PC-9 (cell line): ENCODE measurements at regions of chr1 and their contacts with region 1.

Region 1: DNA sequence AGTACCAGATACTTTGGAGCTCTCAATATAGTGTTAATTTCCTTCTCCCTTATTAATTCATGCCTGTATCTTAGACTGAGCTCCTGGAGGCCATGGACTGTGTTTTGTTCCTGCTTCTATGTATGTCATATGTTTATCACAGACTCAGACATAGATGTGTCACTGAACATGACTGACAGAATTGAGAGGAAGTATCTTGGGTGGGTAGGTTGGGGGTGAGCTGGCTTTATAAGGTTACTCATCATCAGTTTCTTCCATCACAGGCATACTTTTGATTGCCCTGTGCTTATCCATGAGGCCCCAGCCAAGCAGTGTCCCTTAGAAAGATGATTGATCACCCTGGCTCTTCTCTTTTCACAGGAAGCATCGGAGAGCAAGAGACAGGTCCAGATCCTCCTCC is 5.6 kb upstream of the SH3D21 start:
- DNase-seq: peak in 1 of 2 experiments; percentile 60
- H3K4me3 ChIP-seq: no peak overlapping the region
- H3K27ac ChIP-seq: peak overlapping the region; percentile 89
- H3K4me1 ChIP-seq: peaks cover 32% of the 10 kb centered on the region
- H3K27me3 ChIP-seq: no peaks in the 10 kb centered on the region
- CTCF ChIP-seq: no peak

Region 2: GRCh38 chr1:35797380-35797779 is 503.1 kb before region 1 on chr1:
- CTCF ChIA-PET with region 1: no interaction called
- POLR2A ChIA-PET with region 1: no interaction called
- intact Hi-C with region 1: no loop called
- DNase-seq: no peak
- H3K4me3 ChIP-seq: no peak overlapping the region
- H3K27ac ChIP-seq: no peak overlapping the region
- H3K4me1 ChIP-seq: no peaks in the 10 kb centered on the region
- H3K27me3 ChIP-seq: no peaks in the 10 kb centered on the region
- CTCF ChIP-seq: no peak

Region 3: GRCh38 chr1:36279110-36279788 is 21.3 kb before region 1 on chr1:
- CTCF ChIA-PET with region 1: interaction called, 11 read pairs
- POLR2A ChIA-PET with region 1: no interaction called
- intact Hi-C with region 1: no loop called
- DNase-seq: no peak
- H3K4me3 ChIP-seq: no peak overlapping the region
- H3K27ac ChIP-seq: peak overlapping the region; percentile 31; the same call in 1 of the 2 replicates
- H3K4me1 ChIP-seq: no peaks in the 10 kb centered on the region
- H3K27me3 ChIP-seq: no peaks in the 10 kb centered on the region
- CTCF ChIP-seq: no peak

Region 4: DNA sequence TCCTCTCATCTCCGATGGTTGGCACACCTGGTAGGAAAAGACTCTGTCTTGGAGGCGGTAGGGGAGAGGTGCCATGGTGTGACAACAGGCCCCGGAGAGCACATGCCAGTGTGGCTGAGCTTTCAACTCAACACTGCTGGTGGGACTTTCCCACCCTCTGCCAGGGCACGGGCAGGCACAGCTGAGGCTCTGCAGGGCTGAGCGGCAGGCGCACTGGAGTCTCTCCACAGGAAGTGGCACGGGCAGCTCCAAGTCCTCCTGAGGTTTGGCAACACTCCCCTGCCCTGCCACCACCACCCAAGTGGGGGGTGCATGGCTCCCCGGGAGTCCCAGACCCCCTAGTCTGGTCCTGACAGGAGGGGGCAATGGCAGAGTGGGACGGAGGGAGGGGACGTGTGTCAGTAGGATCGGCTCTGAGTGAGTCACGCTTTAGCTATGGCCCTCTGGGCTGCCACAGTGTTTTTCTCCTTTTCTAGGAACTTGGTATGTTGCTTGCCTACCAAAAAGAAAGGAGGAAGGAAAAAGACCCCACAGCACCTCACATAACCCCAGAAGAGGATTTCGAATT is 50.2 kb after region 1 on chr1:
- CTCF ChIA-PET with region 1: interaction called, 10 read pairs
- POLR2A ChIA-PET with region 1: interaction called, 4 read pairs
- intact Hi-C with region 1: no loop called
- DNase-seq: peak; percentile 89 to 91
- H3K4me3 ChIP-seq: peak overlapping the region; percentile 41; the same call in 1 of the 2 replicates
- H3K27ac ChIP-seq: peak overlapping the region; percentile 97
- H3K4me1 ChIP-seq: peaks cover 67% of the 10 kb centered on the region
- H3K27me3 ChIP-seq: no peaks in the 10 kb centered on the region
- CTCF ChIP-seq: no peak

Region 5: DNA sequence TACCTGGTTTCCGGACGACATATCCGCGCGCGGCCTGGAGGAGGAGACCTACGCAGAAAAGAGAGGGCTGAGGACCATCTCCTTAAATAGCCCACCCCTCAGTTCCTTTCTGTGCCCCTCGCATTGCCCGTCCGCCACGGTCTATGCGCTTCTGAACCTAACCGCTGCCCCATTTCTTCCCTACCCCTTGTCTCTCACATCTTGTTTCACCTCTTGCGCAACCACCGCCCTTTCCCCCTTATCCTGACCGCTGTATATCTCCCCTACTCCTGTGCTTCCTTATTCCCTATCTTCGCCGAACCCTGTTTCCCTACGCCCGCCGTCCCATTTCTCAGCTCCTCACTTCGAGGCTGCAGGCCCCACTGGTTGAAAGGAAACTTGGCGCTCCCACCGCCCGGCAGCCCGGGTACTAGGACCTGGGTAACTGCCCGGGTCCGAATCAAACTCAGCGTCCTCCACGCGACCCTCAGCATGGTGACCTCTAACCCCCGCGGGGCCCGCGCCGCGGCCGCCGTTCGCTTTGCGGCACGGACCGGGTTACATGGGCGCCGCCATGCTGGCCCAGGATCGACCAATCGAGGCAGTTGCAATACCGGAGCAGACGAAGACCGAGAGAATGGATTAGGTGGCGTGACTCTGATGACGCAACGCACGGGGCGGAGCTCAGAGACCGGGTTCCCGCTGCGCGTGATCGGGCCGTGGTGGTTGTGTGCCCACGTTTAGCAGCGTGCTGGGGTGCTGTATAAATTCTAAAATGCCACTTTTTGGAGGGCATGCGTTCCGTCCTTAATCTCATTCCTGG is 163.5 kb after region 1 on chr1 and contains the start of gene MRPS15:
- CTCF ChIA-PET with region 1: no interaction called
- POLR2A ChIA-PET with region 1: interaction called, 15 read pairs
- intact Hi-C with region 1: no loop called
- DNase-seq: peak; percentile 89 to 95
- H3K4me3 ChIP-seq: peak within 1 kb of the TSS; percentile 96
- H3K27ac ChIP-seq: peak within 1 kb of the TSS; percentile 93
- H3K4me1 ChIP-seq: peaks cover 33% of the 10 kb centered on the region
- H3K27me3 ChIP-seq: no peaks in the 10 kb centered on the region
- CTCF ChIP-seq: no peak
- total RNA-seq, gene MRPS15: 138 and 200 TPM in 2 replicates

Region 6: GRCh38 chr1:36475910-36476604 is 175.5 kb after region 1 on chr1:
- CTCF ChIA-PET with region 1: no interaction called
- POLR2A ChIA-PET with region 1: no interaction called
- intact Hi-C with region 1: no loop called
- DNase-seq: no peak
- H3K4me3 ChIP-seq: no peak overlapping the region
- H3K27ac ChIP-seq: no peak overlapping the region
- H3K4me1 ChIP-seq: peaks cover 18% of the 10 kb centered on the region
- H3K27me3 ChIP-seq: no peaks in the 10 kb centered on the region
- CTCF ChIP-seq: no peak